ENCODE measurements at regions of chr2 and their contacts with region 1.

Region 1: DNA sequence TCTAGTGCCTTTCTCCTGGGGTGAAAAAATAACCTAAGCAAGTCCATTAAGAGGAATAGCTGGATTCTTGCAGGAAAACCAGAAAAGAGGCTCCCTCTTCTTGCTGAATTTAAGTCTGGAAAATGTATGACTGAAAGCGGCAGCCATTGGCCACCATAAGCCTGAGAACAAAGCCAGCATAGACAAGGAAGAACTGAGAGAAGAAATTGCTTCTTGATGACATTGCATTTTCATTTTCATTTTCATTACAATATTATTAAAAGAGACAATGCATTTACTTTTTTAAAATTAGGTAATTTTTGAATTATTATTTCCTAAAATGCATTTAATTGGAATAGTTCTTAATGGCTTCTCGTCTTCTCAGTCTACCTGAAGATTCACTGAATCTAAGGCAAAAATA is 1157.5 kb upstream of the ZEB2 start:
- DNase-seq: no peak

Region 2: GRCh38 chr2:145760781-145761649 is 83.6 kb after region 1 on chr2:
- intact Hi-C with region 1: no loop called
- DNase-seq: no peak

Region 3: GRCh38 chr2:146189541-146189940 is 512.2 kb after region 1 on chr2:
- intact Hi-C with region 1: loop called (anchors 5 kb)
- DNase-seq: no peak